ENCODE measurements at regions of chrX and their contacts with region 1.

Region 1: GRCh38 chrX:47687263-47687662 is 28.3 kb upstream of the UXT start:
- DNase-seq: no peak
- ATAC-seq: no peak
- H3K4me3 ChIP-seq: no peak overlapping the region
- H3K27ac ChIP-seq: no peak overlapping the region
- H3K4me1 ChIP-seq: no peaks in the 10 kb centered on the region
- H3K27me3 ChIP-seq: peaks cover 0 to 29% (median 0%) of the 10 kb centered on the region in 7 donors
- CTCF ChIP-seq: no peak

Region 2: GRCh38 chrX:47749185-47749967 is 62.1 kb after region 1 on chrX:
- intact Hi-C with region 1: loop called in 2 of 10 experiments (anchors 10 kb)
- DNase-seq: peak in 1 of 2 donors; percentile 5
- ATAC-seq: peak in 2 of 8 donors; percentile 39 to 50
- H3K4me3 ChIP-seq: no peak overlapping the region
- H3K27ac ChIP-seq: no peak overlapping the region
- H3K4me1 ChIP-seq: no peaks in the 10 kb centered on the region
- H3K27me3 ChIP-seq: peaks cover 0 to 44% (median 0%) of the 10 kb centered on the region in 7 donors
- CTCF ChIP-seq: no peak

Region 3: DNA sequence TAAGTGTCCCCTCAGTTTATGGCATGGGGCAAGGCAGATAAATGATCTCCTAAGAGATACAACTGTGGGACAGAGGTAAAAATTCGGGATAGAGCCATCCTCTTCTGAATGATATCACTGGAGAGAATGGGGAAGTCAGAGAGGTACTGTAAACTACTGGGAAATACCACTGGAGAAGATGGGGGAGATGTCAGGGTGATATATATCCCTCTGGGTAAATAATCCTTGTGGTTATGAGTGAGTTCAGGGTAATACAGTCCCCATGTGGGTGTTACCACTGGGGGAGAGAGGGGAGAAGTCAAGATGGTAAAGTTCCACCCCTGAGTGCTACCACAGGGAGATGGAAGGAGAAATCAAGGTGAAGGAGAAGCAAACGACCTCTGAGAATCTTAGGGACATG is 85.5 kb after region 1 on chrX:
- intact Hi-C with region 1: loop called in 1 of 10 experiments (anchors 10 kb)
- DNase-seq: no peak
- ATAC-seq: no peak
- H3K4me3 ChIP-seq: no peak overlapping the region
- H3K27ac ChIP-seq: no peak overlapping the region
- H3K4me1 ChIP-seq: no peaks in the 10 kb centered on the region
- H3K27me3 ChIP-seq: peaks cover 0 to 7% (median 0%) of the 10 kb centered on the region in 7 donors
- CTCF ChIP-seq: no peak

Region 4: GRCh38 chrX:47815901-47816845 is 128.9 kb after region 1 on chrX:
- intact Hi-C with region 1: no loop called
- DNase-seq: no peak
- ATAC-seq: no peak
- H3K4me3 ChIP-seq: no peak overlapping the region
- H3K27ac ChIP-seq: no peak overlapping the region
- H3K4me1 ChIP-seq: peaks cover 0 to 6% (median 0%) of the 10 kb centered on the region in 9 donors
- H3K27me3 ChIP-seq: peaks cover 0 to 46% (median 0%) of the 10 kb centered on the region in 7 donors
- CTCF ChIP-seq: no peak

Measured in heart right ventricle (tissue), 16 donors.